B cell (primary cell): ENCODE measurements at regions of chr2 and their contacts with region 1.

Region 1: GRCh38 chr2:226799181-226799975 is at the start of gene IRS1:
- DNase-seq: peak; percentile 81
- ATAC-seq: peak; percentile 51
- H3K4me3 ChIP-seq: peak within 1 kb of the TSS; percentile 46 to 79 (median 75)
- H3K4me3 Mint-ChIP-seq: peak within 1 kb of the TSS; percentile 95
- H3K27ac ChIP-seq: peak within 1 kb of the TSS; percentile 30 to 72
- H3K27ac Mint-ChIP-seq: peak within 1 kb of the TSS; percentile 94
- H3K4me1 ChIP-seq: peaks cover 17 to 26% of the 10 kb centered on the region in 2 donors
- H3K4me1 Mint-ChIP-seq: peaks cover 40% of the 10 kb centered on the region
- H3K27me3 ChIP-seq: peaks cover 0 to under 1% (median 0%) of the 10 kb centered on the region in 4 experiments
- H3K27me3 Mint-ChIP-seq: peaks cover 5% of the 10 kb centered on the region
- CTCF ChIP-seq: peak; percentile 62
- total RNA-seq, gene IRS1: 10.0 and 11.9 TPM in 2 replicates

Region 2: DNA sequence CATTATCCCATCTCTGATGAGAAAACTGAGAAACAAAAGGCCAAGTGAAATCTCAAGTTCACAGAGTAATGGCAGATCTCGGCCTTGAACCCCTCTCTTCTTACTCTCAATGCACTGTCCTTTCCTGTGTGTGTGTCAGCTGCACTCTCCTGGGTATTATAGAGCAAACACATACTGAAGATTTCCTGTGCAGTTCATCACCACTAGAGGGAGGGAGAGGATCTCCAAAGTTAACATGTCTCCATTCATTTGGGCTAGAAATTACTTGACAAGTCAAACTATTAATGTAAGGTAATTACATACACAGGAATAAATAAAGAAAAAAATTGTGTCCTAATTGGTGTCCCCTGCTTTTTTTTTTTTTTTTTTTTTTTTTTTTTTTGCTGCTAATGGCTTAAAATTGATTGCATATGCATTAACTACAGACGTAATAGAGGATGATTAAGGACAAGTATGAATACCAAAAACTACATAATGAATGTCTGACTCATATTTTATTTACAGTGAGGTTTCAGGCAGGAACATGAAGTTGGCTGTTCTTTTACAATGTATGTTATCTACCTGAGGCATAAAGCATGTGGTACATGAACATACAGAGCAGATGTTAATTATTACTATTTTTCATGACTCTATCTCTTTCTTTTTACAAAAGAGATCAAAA is 1130.6 kb before region 1 on chr2:
- CTCF ChIA-PET with region 1: interaction called, 19 read pairs
- POLR2A ChIA-PET with region 1: no interaction called
- intact Hi-C with region 1: loop called (anchors 1 kb)
- DNase-seq: peak; percentile 67
- ATAC-seq: peak; percentile 60
- H3K4me3 ChIP-seq: no peak overlapping the region
- H3K4me3 Mint-ChIP-seq: no peak overlapping the region
- H3K27ac ChIP-seq: no peak overlapping the region
- H3K27ac Mint-ChIP-seq: no peak overlapping the region
- H3K4me1 ChIP-seq: no peaks in the 10 kb centered on the region
- H3K4me1 Mint-ChIP-seq: no peaks in the 10 kb centered on the region
- H3K27me3 ChIP-seq: no peaks in the 10 kb centered on the region
- H3K27me3 Mint-ChIP-seq: peaks cover 3% of the 10 kb centered on the region
- CTCF ChIP-seq: peak; percentile 84

Region 3: DNA sequence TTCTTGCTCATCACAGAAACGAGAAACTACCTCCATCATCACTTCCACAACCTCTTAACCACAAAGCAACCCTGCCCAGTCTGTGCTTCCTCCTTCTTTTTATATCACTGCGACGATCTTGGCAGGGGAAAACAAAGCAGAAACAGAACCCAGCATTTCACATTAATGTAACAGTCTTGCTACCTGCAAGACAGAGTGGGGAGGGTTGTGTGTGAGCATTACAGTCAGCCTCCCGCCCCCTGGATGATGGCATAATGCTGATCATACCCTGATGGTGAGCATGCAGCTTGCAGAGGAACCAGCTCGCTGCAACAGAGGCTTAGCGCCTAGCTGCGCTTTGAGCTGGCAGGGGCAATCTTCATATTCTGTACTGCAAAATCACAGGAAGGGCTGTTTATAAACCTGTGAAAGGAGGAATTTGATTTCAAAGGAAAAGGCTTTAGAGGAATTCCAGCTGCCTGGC is 375.8 kb before region 1 on chr2:
- CTCF ChIA-PET with region 1: interaction called, 6 read pairs
- POLR2A ChIA-PET with region 1: no interaction called
- intact Hi-C with region 1: loop called (anchors 1 kb)
- DNase-seq: peak; percentile 88
- ATAC-seq: peak; percentile 89
- H3K4me3 ChIP-seq: peak overlapping the region in 4 of 5 experiments; percentile 2 to 51 (median 24)
- H3K4me3 Mint-ChIP-seq: peak overlapping the region; percentile 62
- H3K27ac ChIP-seq: peak overlapping the region in 1 of 2 donors; percentile 5
- H3K27ac Mint-ChIP-seq: peak overlapping the region; percentile 27
- H3K4me1 ChIP-seq: peaks cover 14 to 44% of the 10 kb centered on the region in 2 donors
- H3K4me1 Mint-ChIP-seq: peaks cover 35% of the 10 kb centered on the region
- H3K27me3 ChIP-seq: peaks cover 0 to 3% (median 0%) of the 10 kb centered on the region in 4 experiments
- H3K27me3 Mint-ChIP-seq: peaks cover 3% of the 10 kb centered on the region
- CTCF ChIP-seq: no peak

Region 4: DNA sequence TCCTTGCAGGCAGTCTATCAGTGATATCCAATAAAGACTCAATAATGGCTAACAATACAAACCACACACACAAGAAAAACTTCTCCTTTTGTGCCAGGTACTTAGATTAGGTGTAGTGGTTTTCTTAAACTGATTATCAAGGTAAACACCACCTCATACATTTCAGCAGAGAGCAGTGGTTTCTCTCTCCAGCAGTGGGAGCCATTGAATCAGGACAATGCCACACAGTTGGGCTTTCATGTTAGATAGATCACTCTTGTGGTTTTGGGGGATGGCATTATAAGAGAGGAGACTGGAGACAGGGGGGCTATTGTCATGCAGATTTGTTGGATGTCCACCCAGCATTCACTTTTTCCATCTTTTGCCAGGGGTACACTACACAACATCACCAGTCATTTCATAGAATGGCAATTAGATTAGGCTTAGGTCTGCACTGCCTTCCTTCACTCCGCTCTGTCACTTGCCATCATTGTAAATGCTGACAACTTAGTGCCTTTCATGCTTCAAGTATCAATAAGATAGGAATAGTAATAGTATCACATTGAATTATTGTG is 13.8 kb after region 1 on chr2:
- CTCF ChIA-PET with region 1: interaction called, 25 read pairs
- POLR2A ChIA-PET with region 1: no interaction called
- intact Hi-C with region 1: no loop called
- DNase-seq: peak; percentile 40
- ATAC-seq: no peak
- H3K4me3 ChIP-seq: no peak overlapping the region
- H3K4me3 Mint-ChIP-seq: no peak overlapping the region
- H3K27ac ChIP-seq: no peak overlapping the region
- H3K27ac Mint-ChIP-seq: no peak overlapping the region
- H3K4me1 ChIP-seq: no peaks in the 10 kb centered on the region
- H3K4me1 Mint-ChIP-seq: no peaks in the 10 kb centered on the region
- H3K27me3 ChIP-seq: peaks cover 0 to 13% (median 5%) of the 10 kb centered on the region in 4 experiments
- H3K27me3 Mint-ChIP-seq: peaks cover 27% of the 10 kb centered on the region
- CTCF ChIP-seq: peak; percentile 16

Region 5: DNA sequence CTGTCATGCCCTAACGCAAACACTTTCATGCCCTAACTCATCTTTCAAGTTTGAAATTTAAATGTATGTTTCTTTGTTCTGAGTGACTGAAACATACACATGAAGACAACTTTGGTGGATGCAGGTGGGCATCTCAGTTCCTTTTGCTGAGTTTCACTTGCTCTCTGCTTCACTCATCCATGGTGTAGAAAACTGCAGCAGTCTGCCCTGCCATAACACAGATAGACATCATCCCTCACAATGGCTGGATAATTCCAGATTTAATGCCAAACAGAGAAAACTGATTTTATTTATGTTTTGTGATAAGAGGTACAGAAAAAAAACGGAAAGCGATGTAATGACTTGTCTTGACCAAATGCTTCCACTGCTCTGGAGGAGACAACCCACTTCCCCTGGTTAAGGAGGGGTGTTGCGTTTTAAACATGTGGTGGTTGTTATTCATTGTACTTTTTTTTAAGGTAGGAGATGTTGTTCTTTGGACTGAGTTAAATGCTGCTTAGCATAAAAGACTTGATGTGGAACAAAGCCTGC is 106.8 kb after region 1 on chr2:
- CTCF ChIA-PET with region 1: interaction called, 11 read pairs
- POLR2A ChIA-PET with region 1: interaction called, 11 read pairs
- intact Hi-C with region 1: loop called (anchors 2 kb)
- DNase-seq: peak; percentile 87
- ATAC-seq: peak; percentile 81
- H3K4me3 ChIP-seq: peak overlapping the region; percentile 36 to 60 (median 53)
- H3K4me3 Mint-ChIP-seq: peak overlapping the region; percentile 77
- H3K27ac ChIP-seq: peak overlapping the region; percentile 97 to 99
- H3K27ac Mint-ChIP-seq: peak overlapping the region; percentile 96
- H3K4me1 ChIP-seq: peaks cover 83 to 91% of the 10 kb centered on the region in 2 donors
- H3K4me1 Mint-ChIP-seq: peaks cover 90% of the 10 kb centered on the region
- H3K27me3 ChIP-seq: no peaks in the 10 kb centered on the region
- H3K27me3 Mint-ChIP-seq: no peaks in the 10 kb centered on the region
- CTCF ChIP-seq: no peak